ENCODE measurements at regions of chr15 and their contacts with region 1.

Region 1: DNA sequence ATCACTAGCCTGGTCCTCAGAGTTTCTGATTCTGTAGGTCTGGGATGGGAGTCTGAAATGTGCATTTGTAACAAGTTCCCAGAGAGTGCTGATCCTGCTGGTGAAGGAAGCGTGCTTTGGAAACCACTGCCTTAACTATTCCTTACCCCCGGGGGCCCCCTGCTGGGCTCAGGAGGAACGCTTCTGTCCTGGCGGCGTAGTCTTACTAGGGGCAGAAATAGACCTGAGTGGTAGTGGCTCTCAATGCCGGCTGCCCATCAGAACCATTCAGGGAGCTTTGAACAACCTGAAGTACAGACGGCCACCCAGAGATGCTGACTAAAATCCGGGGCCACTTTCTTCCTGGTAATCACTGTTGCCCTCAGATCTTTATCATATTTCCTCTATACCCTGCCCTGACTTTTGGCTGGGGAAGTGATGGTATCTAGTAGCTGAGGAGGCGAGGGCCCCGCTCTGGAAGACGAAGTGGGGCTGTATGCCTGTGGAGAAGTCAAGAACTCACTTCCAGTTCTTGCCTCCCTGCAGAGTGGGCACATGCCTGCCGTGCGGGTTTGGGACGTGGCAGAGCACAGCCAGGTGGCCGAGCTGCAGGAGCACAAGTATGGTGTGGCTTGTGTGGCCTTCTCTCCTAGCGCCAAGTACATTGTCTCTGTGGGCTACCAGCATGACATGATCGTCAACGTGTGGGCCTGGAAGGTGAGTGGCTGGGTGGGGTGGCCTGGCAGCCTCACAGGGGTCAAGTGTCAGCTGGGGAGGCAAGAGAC is 16.3 kb upstream of the JMJD7 start:
- DNase-seq: peak; percentile 71
- H3K4me3 ChIP-seq: no peak overlapping the region
- H3K27ac ChIP-seq: no peak overlapping the region
- H3K27me3 ChIP-seq: no peaks in the 10 kb centered on the region
- CTCF ChIP-seq: peak; percentile 97

Region 2: DNA sequence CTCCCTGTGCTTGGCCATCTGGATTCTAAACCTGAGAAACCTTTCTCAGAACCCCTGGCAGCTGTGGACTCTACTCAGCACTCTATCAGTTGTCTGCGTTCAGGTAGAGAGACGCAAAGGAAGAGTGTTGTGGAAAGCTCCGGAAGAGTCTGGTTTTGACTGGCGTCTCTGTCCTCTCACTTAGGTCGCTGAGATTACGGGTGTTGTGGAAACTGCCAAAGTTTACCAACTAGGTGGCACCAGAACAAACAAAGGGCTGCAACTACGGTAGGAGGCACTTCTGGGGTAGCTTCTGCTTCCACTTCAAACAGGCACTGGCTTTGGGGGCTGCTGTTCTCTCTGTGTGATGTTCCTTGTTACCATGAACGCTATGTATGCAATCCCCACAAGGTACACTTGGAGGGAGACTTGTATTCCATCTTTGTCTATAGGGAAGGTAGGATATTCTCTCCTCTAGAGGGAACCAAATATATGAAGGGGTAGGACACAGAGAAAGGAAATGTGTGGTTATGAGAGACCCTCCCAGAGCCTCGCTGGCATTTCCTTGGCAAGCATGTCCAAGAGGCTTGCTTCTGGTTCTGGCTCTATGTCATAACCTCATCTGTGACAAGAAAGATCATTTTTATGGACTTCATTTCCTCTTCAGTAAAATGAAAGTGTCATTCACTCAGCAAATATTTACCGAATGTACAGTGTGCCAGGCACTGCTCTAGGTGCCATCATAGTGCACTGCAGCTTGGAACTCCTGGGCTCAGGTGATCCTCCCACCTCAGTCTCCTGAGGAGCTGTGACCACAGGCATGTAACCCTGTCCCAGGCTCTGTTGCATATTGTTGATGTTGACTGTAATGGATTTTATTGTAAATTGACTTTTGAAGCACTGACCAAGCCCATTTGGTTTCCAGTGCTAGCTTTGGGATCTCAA is 336.9 kb before region 1 on chr15:
- CTCF ChIA-PET with region 1: no interaction called
- POLR2A ChIA-PET with region 1: no interaction called
- DNase-seq: no peak
- H3K4me3 ChIP-seq: no peak overlapping the region
- H3K27ac ChIP-seq: no peak overlapping the region
- H3K27me3 ChIP-seq: no peaks in the 10 kb centered on the region
- CTCF ChIP-seq: no peak

Region 3: GRCh38 chr15:41517895-41518449 is 293.6 kb before region 1 on chr15:
- CTCF ChIA-PET with region 1: no interaction called
- POLR2A ChIA-PET with region 1: interaction called, 11 read pairs
- DNase-seq: no peak
- H3K4me3 ChIP-seq: no peak overlapping the region
- H3K27ac ChIP-seq: no peak overlapping the region
- H3K27me3 ChIP-seq: peaks cover 10% of the 10 kb centered on the region
- CTCF ChIP-seq: no peak

Region 4: DNA sequence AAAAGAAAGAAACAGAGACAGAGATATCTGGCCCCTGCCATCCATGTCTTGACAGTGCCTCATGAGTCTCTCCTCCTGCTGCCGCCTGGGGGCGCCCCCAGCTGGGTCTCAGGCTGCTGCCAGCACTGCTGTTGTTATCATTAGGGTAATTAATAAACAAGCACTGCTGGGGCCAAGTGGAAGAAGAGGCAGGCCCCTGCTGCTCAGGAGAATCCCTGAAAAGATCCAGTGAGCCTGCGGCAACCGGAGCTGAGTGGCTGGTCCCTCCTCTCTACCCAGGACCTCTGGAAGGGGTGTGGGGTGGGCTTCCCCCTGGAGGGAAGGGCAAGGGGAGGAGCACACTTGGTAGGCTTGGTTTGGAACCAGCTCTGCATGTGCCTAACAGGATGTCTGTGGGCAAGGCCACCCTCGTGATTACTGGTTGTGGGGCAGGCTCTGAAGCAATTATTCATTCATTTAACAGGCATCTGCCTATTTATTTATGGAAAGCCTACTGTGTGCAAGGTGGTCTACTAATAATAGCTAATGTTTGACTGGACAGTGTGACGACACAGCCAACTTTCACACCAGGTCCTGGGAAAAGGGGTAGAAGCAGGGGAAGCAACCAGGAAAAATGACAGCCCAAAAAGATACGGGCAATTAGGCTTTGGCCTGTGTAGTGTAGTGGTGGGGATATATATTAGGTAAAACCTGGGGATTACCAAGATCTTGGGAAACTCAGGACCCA is 253.8 kb before region 1 on chr15:
- CTCF ChIA-PET with region 1: interaction called, 11 read pairs
- POLR2A ChIA-PET with region 1: interaction called, 3 read pairs
- DNase-seq: peak; percentile 39
- H3K4me3 ChIP-seq: peak overlapping the region; percentile 67
- H3K27ac ChIP-seq: no peak overlapping the region
- H3K27me3 ChIP-seq: no peaks in the 10 kb centered on the region
- CTCF ChIP-seq: peak; percentile 91

Region 5: GRCh38 chr15:41603941-41604911 is 207.4 kb before region 1 on chr15:
- CTCF ChIA-PET with region 1: interaction called, 29 read pairs
- POLR2A ChIA-PET with region 1: no interaction called
- DNase-seq: no peak
- H3K4me3 ChIP-seq: peak overlapping the region; percentile 52
- H3K27ac ChIP-seq: peak overlapping the region; percentile 78
- H3K27me3 ChIP-seq: no peaks in the 10 kb centered on the region
- CTCF ChIP-seq: peak; percentile 90

Region 6: GRCh38 chr15:41795996-41796856 is 15.4 kb before region 1 on chr15:
- CTCF ChIA-PET with region 1: interaction called, 25 read pairs
- POLR2A ChIA-PET with region 1: no interaction called
- DNase-seq: no peak
- H3K4me3 ChIP-seq: no peak overlapping the region
- H3K27ac ChIP-seq: peak overlapping the region; percentile 68
- H3K27me3 ChIP-seq: no peaks in the 10 kb centered on the region
- CTCF ChIP-seq: no peak

Region 7: GRCh38 chr15:41849861-41850260 is 38.2 kb after region 1 on chr15:
- CTCF ChIA-PET with region 1: no interaction called
- POLR2A ChIA-PET with region 1: no interaction called
- DNase-seq: no peak
- H3K4me3 ChIP-seq: no peak overlapping the region
- H3K27ac ChIP-seq: no peak overlapping the region
- H3K27me3 ChIP-seq: peaks cover 9% of the 10 kb centered on the region
- CTCF ChIP-seq: no peak

Measured in AG04450 (cell line).